ENCODE measurements at regions of chr13 and their contacts with region 1.

Region 1: DNA sequence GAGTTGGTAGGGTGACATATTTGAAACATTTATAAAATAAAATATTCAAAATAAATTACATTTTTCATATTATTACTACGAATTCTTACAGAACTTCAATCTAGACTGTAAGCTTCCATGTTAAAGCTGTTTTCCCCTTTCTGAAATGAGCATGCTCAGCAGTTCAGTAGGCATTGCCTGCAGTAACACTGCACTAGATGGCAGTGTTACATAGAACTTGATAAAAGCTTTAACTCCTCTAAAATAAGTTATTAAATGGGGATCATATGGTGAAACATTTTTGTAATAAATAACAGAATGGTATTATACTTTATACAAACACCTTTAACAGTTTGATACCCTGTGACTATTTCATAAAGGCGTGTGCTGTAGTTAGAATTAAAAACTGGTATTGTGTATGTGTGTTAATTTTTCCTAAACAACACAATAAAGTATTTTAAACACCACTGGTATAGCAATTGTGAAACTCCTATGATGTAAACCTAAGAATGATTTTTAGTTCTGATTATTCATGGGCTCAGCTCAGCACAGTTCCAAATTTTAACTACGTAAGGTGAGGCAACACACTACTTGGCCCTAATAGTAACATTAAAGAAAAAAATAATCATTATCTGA is 11.6 kb upstream of the GPR18 start:
- DNase-seq: no peak
- ATAC-seq: peak in 3 of 4 donors; percentile 54 to 77 (median 70)
- H3K4me3 ChIP-seq: no peak overlapping the region
- H3K27ac ChIP-seq: peak overlapping the region in 2 of 12 donors; percentile 21 to 85
- H3K4me1 ChIP-seq: peaks cover 0 to 38% (median 0%) of the 10 kb centered on the region in 12 donors
- H3K27me3 ChIP-seq: no peaks in the 10 kb centered on the region
- CTCF ChIP-seq: peak; percentile 45 to 79 (median 65)
- POLR2A ChIP-seq: no peak

Region 2: GRCh38 chr13:99176309-99177276 is 93.1 kb before region 1 on chr13:
- intact Hi-C with region 1: loop called (anchors 1 to 2 kb)
- DNase-seq: peak; percentile 66 to 81 (median 70)
- ATAC-seq: peak; percentile 63 to 93 (median 90)
- H3K4me3 ChIP-seq: no peak overlapping the region
- H3K27ac ChIP-seq: no peak overlapping the region
- H3K4me1 ChIP-seq: peaks cover 0 to 21% (median 0%) of the 10 kb centered on the region in 12 donors
- H3K27me3 ChIP-seq: peaks cover 0 to 43% (median 5%) of the 10 kb centered on the region in 9 donors
- CTCF ChIP-seq: peak; percentile 90 to 97 (median 93)
- POLR2A ChIP-seq: no peak

Region 3: DNA sequence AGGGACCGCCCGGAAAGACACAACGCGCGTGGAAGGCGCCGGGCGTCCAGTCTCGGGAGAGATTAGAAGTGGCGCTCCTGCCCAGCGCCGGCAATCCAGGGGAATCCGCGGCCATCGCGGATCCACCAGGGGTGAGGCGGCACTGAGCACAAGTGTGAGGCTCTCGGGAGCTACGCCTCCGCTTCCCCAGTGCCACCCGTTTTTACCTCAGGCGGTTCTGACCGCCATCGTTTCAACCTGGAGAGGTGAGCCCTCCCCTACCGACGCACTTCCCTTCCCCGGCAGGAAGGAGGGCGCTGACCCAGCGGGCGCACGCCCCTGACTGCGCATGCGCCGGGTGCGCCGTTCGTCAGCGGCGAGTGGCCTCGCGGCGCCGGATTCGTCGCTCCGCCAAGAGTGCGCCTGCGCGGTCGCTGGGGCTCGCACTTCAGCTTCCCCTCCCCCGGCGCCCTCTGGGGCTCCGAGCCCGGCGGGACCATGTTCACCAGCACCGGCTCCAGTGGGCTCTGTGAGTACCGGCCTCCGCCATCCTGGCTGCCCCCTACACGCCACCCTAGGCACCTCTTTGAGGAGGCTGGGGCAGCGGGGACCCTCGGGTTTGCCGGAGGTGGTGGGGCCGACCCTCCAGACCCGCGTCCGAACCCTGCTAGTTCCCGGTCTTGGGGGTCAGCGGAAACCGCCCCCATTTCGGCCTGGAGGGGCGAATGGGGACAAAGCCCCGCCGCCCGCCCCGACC is 69.1 kb before region 1 on chr13 and contains the start of gene UBAC2:
- intact Hi-C with region 1: loop called in 3 of 10 experiments (anchors 5 kb)
- DNase-seq: peak; percentile 95 to 99 (median 97)
- ATAC-seq: peak; percentile 86 to 98 (median 94)
- H3K4me3 ChIP-seq: peak within 1 kb of the TSS; percentile 80 to 100 (median 92)
- H3K27ac ChIP-seq: peak within 1 kb of the TSS; percentile 88 to 98 (median 96)
- H3K4me1 ChIP-seq: peaks cover 0 to 48% (median 31%) of the 10 kb centered on the region in 12 donors
- H3K27me3 ChIP-seq: no peaks in the 10 kb centered on the region
- CTCF ChIP-seq: peak in 2 of 12 donors; percentile 15 to 23
- POLR2A ChIP-seq: peak; percentile 55 to 92
- total RNA-seq, gene UBAC2: 32.6 to 55.5 (median 48.5) TPM

Region 4: GRCh38 chr13:99339736-99340397 is 70.1 kb after region 1 on chr13:
- intact Hi-C with region 1: loop called in 1 of 10 experiments (anchors 2 kb)
- DNase-seq: no peak
- ATAC-seq: no peak
- H3K4me3 ChIP-seq: no peak overlapping the region
- H3K27ac ChIP-seq: peak overlapping the region in 2 of 12 donors; percentile 13 to 15
- H3K4me1 ChIP-seq: peaks cover 0 to 29% (median 0%) of the 10 kb centered on the region in 12 donors
- H3K27me3 ChIP-seq: no peaks in the 10 kb centered on the region
- CTCF ChIP-seq: no peak
- POLR2A ChIP-seq: no peak

Region 5: GRCh38 chr13:99366075-99366987 is 96.6 kb after region 1 on chr13:
- intact Hi-C with region 1: loop called in 2 of 10 experiments (anchors 10 kb)
- DNase-seq: no peak
- ATAC-seq: no peak
- H3K4me3 ChIP-seq: no peak overlapping the region
- H3K27ac ChIP-seq: peak overlapping the region in 1 of 12 donors; percentile 47
- H3K4me1 ChIP-seq: peaks cover 0 to 36% (median 2%) of the 10 kb centered on the region in 12 donors
- H3K27me3 ChIP-seq: no peaks in the 10 kb centered on the region
- CTCF ChIP-seq: no peak
- POLR2A ChIP-seq: no peak

Region 6: DNA sequence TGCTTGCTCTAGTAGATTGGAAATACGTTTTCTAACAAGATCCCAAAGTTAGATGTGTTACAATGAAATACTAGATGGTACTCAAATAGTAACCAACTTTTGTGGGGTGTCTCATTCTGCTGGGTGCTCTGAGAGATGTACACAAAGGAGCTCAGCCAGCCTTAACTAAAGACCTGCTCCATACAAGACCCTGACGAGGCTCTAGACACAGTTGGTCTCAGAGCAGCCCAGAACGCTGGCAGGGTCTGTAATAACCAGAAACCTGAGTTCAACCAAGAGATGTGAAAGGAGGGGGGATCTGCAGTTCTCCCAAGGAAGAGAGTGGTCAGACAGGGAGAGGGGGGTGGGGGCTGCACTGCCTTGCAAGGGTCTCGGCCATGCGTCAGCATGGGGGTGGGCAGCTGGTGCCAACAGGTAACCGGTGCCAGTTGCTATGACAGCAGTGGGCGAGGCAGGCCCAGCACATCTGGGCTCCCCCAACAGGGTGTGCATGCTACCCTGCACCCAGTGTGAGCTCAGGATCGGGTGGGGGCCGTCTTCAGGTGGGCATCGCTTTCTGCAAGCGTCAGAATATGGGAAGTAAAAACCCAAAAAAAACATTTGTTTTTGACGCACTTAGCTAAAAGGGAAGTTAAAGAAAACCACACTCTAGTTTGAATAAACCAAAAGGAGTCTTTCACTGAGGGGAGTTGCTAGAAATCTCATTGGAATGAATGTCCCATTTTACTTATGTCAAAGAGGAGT is 105.4 kb after region 1 on chr13:
- intact Hi-C with region 1: loop called in 1 of 10 experiments (anchors 10 kb)
- DNase-seq: peak in 3 of 5 donors; percentile 34 to 61 (median 46)
- ATAC-seq: peak; percentile 38 to 66 (median 48)
- H3K4me3 ChIP-seq: no peak overlapping the region
- H3K27ac ChIP-seq: peak overlapping the region in 2 of 12 donors; percentile 25 to 77
- H3K4me1 ChIP-seq: peaks cover 0 to 46% (median 0%) of the 10 kb centered on the region in 12 donors
- H3K27me3 ChIP-seq: no peaks in the 10 kb centered on the region
- CTCF ChIP-seq: no peak
- POLR2A ChIP-seq: no peak

Region 7: DNA sequence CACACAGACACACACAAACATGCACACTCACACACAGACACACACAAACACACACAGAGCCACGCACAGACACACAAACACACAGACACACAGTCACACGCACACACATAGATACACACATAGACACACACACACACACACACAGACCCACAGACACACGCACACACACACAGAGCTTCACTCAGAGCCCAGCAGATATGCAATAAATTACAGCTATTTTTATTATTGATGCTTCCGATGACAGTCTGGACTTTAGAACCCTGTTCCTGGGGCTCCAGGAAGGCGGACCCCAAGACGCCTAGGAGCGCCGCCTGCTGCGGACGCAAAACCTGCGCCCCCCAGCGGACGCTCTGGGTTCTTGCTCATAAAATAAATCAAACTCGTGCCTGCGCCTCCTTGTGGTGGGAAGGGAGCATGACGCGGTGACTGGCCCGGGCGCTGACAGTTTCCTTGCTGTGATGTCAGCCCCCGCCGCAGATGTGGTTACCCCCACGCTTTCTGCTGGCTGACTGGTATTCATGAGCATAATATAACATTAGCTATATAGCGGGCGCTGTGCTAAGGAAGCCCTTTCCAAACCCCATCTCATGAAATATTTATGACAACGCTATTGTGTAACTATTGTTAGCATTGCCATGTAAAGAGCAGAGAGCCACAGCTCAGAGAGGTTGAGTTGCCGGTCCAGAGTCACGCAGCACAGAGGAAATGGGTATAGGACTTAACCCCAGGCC is 167.1 kb after region 1 on chr13:
- intact Hi-C with region 1: loop called (anchors 1 to 5 kb)
- DNase-seq: peak; percentile 82 to 93 (median 86)
- ATAC-seq: peak in 3 of 4 donors; percentile 59 to 72 (median 66)
- H3K4me3 ChIP-seq: peak overlapping the region in 1 of 12 donors; percentile 6
- H3K27ac ChIP-seq: no peak overlapping the region
- H3K4me1 ChIP-seq: peaks cover 0 to 36% (median 8%) of the 10 kb centered on the region in 12 donors
- H3K27me3 ChIP-seq: peaks cover 0 to 31% (median 11%) of the 10 kb centered on the region in 9 donors
- CTCF ChIP-seq: peak; percentile 99 to 100 (median 100)
- POLR2A ChIP-seq: no peak